ENCODE measurements at regions of chr2 and their contacts with region 1.

Region 1: GRCh38 chr2:177212106-177212890 is at the start of gene HNRNPA3:
- DNase-seq: peak; percentile 99 to 100 (median 99)
- ATAC-seq: peak; percentile 94 to 97 (median 96)
- H3K4me3 ChIP-seq: peak within 1 kb of the TSS; percentile 60 to 96 (median 82)
- H3K27ac ChIP-seq: peak within 1 kb of the TSS; percentile 95 to 100 (median 99)
- H3K4me1 ChIP-seq: peaks cover 10 to 52% (median 45%) of the 10 kb centered on the region in 12 donors
- H3K27me3 ChIP-seq: no peaks in the 10 kb centered on the region
- CTCF ChIP-seq: peak in 9 of 12 donors; percentile 19 to 57 (median 35)
- POLR2A ChIP-seq: peak; percentile 30 to 86
- total RNA-seq, gene HNRNPA3: 12.7 to 110 (median 73.3) TPM

Region 2: DNA sequence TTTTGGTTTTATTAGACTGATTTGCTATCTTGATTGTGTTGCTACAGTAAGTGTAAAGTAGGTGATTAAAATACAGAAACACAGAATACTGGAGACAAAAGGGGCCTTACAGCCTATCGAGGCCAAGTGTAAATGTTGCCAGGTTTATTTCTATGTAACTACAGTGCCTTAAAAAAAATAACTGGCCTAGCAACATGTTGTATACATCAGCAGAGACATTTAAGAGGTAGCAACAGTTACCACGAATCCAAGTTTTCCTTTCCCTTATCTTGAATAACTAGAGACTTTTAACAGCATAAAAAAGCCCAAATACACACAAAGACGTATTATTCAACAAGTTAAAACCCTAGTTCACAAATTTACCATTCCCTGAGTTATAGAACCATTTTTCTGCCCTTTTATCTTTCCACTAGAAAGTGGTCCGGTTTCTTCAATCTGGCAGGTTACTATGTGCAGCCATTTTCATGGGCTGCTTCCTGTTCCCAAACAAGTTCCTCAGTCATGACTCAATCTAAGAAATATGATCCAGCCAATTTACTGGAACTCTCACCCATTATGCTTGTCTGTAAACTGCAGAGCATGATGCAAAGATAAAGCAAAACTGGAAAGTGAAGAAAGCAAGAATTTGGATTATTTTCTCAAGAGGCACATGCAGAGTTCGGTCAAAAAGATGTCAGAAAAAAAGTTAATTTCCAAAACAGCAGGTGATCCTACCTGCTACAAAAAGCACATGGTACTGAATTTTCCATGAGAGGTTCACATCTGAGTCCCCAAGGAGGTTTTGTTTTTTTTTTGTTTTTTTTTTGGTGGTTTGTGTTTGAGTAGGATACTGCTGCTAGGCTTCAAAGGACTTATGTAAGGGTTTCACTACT is 30.1 kb after region 1 on chr2:
- intact Hi-C with region 1: loop called in 1 of 10 experiments (anchors 2 kb)
- DNase-seq: no peak
- ATAC-seq: peak; percentile 45 to 80 (median 74)
- H3K4me3 ChIP-seq: peak overlapping the region in 8 of 12 donors; percentile 4 to 38 (median 25)
- H3K27ac ChIP-seq: peak overlapping the region; percentile 64 to 94 (median 82)
- H3K4me1 ChIP-seq: peaks cover 31 to 100% (median 97%) of the 10 kb centered on the region in 12 donors
- H3K27me3 ChIP-seq: no peaks in the 10 kb centered on the region
- CTCF ChIP-seq: no peak
- POLR2A ChIP-seq: no peak

Region 3: GRCh38 chr2:177325270-177325929 is 113.1 kb after region 1 on chr2:
- intact Hi-C with region 1: loop called in 1 of 10 experiments (anchors 5 kb)
- DNase-seq: no peak
- ATAC-seq: no peak
- H3K4me3 ChIP-seq: no peak overlapping the region
- H3K27ac ChIP-seq: peak overlapping the region in 1 of 12 donors; percentile 8
- H3K4me1 ChIP-seq: peaks cover 0 to 14% (median 0%) of the 10 kb centered on the region in 12 donors
- H3K27me3 ChIP-seq: no peaks in the 10 kb centered on the region
- CTCF ChIP-seq: no peak
- POLR2A ChIP-seq: no peak

Measured in heart left ventricle (tissue), 16 donors.